Lower leg skin (tissue), 4 donors: ENCODE measurements at regions of chr20 and their contacts with region 1.

Region 1: GRCh38 chr20:62136283-62137091 is 6.7 kb downstream of the PSMA7 start:
- DNase-seq: peak in 1 of 2 donors; percentile 94
- H3K4me3 ChIP-seq: no peak overlapping the region
- CTCF ChIP-seq: no peak
- POLR2A ChIP-seq: no peak

Region 2: DNA sequence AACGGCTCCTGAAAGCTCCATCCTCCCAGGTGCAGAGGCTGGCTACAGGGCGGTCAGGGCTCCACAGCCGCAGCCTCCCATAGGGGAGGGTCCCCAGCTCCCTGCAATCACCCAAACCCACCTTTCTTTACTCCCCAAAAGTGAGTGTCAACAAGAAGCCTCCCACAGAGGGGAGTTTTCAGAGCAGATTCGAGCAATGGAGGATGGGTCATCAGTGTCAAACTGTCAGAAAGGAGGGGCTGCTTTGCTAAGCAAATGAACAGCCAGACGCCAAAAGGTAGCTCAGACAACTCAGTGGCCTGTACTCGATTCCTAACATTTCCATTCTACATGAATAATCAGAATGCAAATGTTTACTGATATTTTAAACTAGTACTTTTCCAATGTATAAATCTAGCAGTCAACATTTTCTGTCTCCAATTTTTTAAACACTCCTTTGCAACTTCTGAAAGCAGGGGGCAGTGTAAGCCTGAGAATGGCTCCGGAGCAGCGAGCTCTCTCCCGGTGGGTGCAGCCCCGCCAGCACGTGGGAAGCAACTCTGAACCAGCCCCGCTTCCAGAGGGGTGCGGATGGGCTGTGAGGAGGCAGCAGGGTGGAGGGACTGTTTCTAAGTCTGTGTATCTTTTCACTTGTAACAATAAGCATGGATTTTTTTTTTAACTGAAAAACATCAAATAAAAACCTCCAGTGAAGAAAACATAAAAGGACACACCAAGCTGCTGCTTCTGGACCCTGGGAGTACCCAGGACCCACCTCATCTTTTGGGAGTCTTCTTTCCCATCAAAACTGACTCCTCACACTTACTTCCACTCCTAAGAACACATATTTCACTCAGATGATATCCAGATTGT is 125.7 kb before region 1 on chr20:
- intact Hi-C with region 1: loop called (anchors 5 kb)
- DNase-seq: peak in 1 of 2 donors; percentile 27
- H3K4me3 ChIP-seq: no peak overlapping the region
- CTCF ChIP-seq: peak in 1 of 3 donors; percentile 8
- POLR2A ChIP-seq: no peak